ENCODE measurements at regions of chr21 and their contacts with region 1.

Region 1: GRCh38 chr21:36319765-36320420 is at the start of gene MORC3:
- DNase-seq: peak; percentile 97
- H3K4me3 Mint-ChIP-seq: peak within 1 kb of the TSS; percentile 93
- H3K27ac Mint-ChIP-seq: peak within 1 kb of the TSS; percentile 95
- H3K4me1 Mint-ChIP-seq: peaks cover 29% of the 10 kb centered on the region
- H3K27me3 Mint-ChIP-seq: peaks cover 4% of the 10 kb centered on the region
- total RNA-seq, gene MORC3: 22.1 and 23.5 TPM in 2 replicates

Region 2: GRCh38 chr21:36021251-36021837 is 298.5 kb before region 1 on chr21:
- intact Hi-C with region 1: no loop called
- DNase-seq: no peak
- H3K4me3 Mint-ChIP-seq: no peak overlapping the region
- H3K27ac Mint-ChIP-seq: no peak overlapping the region
- H3K4me1 Mint-ChIP-seq: no peaks in the 10 kb centered on the region
- H3K27me3 Mint-ChIP-seq: no peaks in the 10 kb centered on the region

Region 3: GRCh38 chr21:36060159-36060921 is 259.6 kb before region 1 on chr21 and contains the start of gene SETD4:
- intact Hi-C with region 1: loop called (anchors 1 kb)
- DNase-seq: peak; percentile 91
- H3K4me3 Mint-ChIP-seq: peak within 1 kb of the TSS; percentile 93
- H3K27ac Mint-ChIP-seq: peak within 1 kb of the TSS; percentile 98
- H3K4me1 Mint-ChIP-seq: peaks cover 23% of the 10 kb centered on the region
- H3K27me3 Mint-ChIP-seq: peaks cover 3% of the 10 kb centered on the region
- total RNA-seq, gene SETD4: 21.9 and 22.0 TPM in 2 replicates

Region 4: GRCh38 chr21:36203617-36203917 is 116.3 kb before region 1 on chr21:
- intact Hi-C with region 1: loop called (anchors 2 kb)
- DNase-seq: no peak
- H3K4me3 Mint-ChIP-seq: no peak overlapping the region
- H3K27ac Mint-ChIP-seq: peak overlapping the region; percentile 49
- H3K4me1 Mint-ChIP-seq: peaks cover 26% of the 10 kb centered on the region
- H3K27me3 Mint-ChIP-seq: peaks cover 2% of the 10 kb centered on the region

Region 5: GRCh38 chr21:36218691-36219090 is 101.2 kb before region 1 on chr21:
- intact Hi-C with region 1: no loop called
- DNase-seq: no peak
- H3K4me3 Mint-ChIP-seq: no peak overlapping the region
- H3K27ac Mint-ChIP-seq: no peak overlapping the region
- H3K4me1 Mint-ChIP-seq: no peaks in the 10 kb centered on the region
- H3K27me3 Mint-ChIP-seq: no peaks in the 10 kb centered on the region

Region 6: DNA sequence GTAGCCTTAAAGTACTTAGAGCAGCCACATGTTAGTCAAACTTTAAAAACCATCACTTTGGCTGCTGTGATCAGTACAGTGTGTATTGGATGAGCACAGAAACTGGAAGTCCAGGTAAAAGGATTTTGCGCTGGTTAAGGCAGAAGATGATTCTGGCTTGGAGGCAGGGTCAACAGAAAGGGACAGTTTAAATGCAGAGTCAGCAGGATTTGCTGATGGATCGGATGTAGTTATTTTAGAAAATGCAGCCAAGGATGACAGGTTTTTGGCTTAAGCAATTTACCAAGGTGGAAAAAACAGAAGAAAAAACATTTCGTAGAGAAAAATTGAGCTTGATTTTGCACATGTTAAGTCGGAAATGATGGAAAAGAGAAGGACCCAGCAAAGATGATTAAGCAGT is 45.8 kb before region 1 on chr21:
- intact Hi-C with region 1: no loop called
- DNase-seq: no peak
- H3K4me3 Mint-ChIP-seq: no peak overlapping the region
- H3K27ac Mint-ChIP-seq: no peak overlapping the region
- H3K4me1 Mint-ChIP-seq: no peaks in the 10 kb centered on the region
- H3K27me3 Mint-ChIP-seq: no peaks in the 10 kb centered on the region

Region 7: GRCh38 chr21:36288651-36289243 is 31.1 kb before region 1 on chr21:
- intact Hi-C with region 1: loop called (anchors 1 kb)
- DNase-seq: no peak
- H3K4me3 Mint-ChIP-seq: peak overlapping the region; percentile 3
- H3K27ac Mint-ChIP-seq: peak overlapping the region; percentile 76
- H3K4me1 Mint-ChIP-seq: peaks cover 19% of the 10 kb centered on the region
- H3K27me3 Mint-ChIP-seq: peaks cover 12% of the 10 kb centered on the region

Region 8: DNA sequence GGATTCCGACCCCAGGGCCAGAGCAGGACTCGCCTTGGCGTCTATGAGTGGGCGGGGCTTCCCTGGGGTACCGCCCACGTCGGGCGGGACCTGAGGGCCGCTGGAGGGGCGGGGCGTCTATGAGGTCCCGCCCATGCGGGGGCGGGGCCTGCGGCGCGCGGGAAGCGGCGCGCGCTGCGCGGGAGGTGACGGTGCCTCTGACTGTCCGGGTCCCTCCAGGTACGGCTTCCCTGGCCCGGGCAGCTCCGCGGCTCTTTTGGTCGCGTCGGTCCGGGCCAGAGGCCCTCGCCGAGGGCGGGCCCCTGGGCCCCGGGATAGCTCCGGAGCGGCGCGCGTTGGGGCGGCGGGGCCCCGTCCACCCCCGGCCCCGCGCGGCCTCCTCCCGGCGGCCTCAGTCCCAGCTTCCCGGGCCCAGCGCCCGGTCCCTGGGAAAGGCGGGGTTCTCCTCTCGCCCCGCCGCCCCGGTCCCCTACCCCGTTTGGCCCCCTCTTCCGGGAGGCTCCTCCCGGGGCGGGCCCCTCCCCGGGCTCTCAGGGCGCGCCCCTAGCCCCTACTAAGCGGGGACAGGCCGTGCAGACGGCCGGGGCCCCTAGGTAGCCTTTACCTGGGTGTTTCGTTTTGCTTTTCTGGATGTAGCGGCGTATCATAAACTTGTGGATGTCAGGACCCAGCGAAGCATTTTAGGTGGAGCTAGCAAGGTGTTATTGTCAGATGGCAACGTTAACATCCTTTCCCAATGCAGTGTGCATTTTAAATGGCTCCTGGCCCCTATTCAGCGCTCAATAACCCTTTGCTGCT is 65.5 kb after region 1 on chr21 and contains the start of gene CHAF1B:
- intact Hi-C with region 1: loop called (anchors 1 kb)
- DNase-seq: peak; percentile 80
- H3K4me3 Mint-ChIP-seq: peak within 1 kb of the TSS; percentile 89
- H3K27ac Mint-ChIP-seq: peak within 1 kb of the TSS; percentile 65
- H3K4me1 Mint-ChIP-seq: peaks cover 25% of the 10 kb centered on the region
- H3K27me3 Mint-ChIP-seq: no peaks in the 10 kb centered on the region
- total RNA-seq, gene CHAF1B: 33.8 and 35.7 TPM in 2 replicates

Region 9: DNA sequence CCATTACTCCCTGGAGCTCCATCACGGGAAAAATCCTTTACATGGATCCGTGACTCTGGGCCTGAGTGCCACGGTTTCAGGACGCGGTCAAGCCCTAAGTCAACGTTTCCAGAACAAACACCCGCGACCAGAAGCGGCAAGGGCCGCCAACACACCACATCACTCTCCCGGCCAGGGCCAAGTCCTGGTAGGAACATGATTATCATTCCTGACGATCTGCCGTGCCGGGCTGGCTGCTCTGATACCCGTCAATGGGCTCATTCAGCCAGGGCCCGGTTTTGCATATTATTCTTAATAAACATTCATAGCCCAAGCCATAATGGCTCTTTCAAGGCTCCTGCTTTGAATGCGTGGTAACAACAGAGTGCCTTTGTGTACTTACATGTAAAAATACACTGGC is 334.4 kb after region 1 on chr21:
- intact Hi-C with region 1: no loop called
- DNase-seq: no peak
- H3K4me3 Mint-ChIP-seq: no peak overlapping the region
- H3K27ac Mint-ChIP-seq: no peak overlapping the region
- H3K4me1 Mint-ChIP-seq: no peaks in the 10 kb centered on the region
- H3K27me3 Mint-ChIP-seq: peaks cover 1% of the 10 kb centered on the region

Measured in activated T-helper 1 cell treated with anti-CD3 and anti-CD28 coated beads, Interleukin-12 subunit alpha, Interleukin-12 subunit beta, Interleukin-2, Interleukin-4 antibody, amounts not matched to agents 30 ng/mL and 10 ng/mL and 1 ng/mL, durations not matched to agents 14 hours and 24 hours and 36 hours (primary cell).